GM12878 (cell line): ENCODE measurements at regions of chr1 and their contacts with region 1.

Region 1: GRCh38 chr1:101136739-101137138 is 100.1 kb upstream of the S1PR1 start:
- DNase-seq: peak; percentile 68
- ATAC-seq: peak; percentile 86
- H3K4me3 ChIP-seq: no peak overlapping the region
- H3K27ac ChIP-seq: no peak overlapping the region
- H3K4me1 ChIP-seq: peaks cover 17% of the 10 kb centered on the region
- H3K27me3 ChIP-seq: no peaks in the 10 kb centered on the region
- CTCF ChIP-seq: peak; percentile 29 to 61 (median 41); a peak in 4 of 6 replicates
- EP300 ChIP-seq: no peak
- POLR2A ChIP-seq: no peak
- RAD21 ChIP-seq: peak; percentile 83

Region 2: DNA sequence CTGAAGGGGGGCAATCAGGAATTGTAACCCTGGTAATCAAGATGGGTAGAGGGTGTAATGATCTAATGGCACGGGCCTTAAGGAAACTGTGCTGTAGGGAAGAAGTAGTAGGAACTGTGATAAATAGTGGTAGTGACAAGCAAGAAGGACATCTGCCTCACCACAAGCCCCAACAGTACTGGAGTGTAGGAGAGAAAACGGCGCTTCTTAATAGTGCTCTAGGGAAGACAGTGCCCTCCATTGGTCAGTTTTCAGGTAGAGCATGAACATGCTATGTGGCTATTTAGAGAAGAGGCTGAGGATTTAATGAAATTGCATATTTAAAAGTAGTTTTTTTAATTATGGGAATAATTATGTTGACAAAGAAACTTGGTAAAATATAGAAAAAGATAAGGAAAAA is 208.6 kb before region 1 on chr1:
- CTCF ChIA-PET with region 1: no interaction called
- POLR2A ChIA-PET with region 1: no interaction called
- RAD21 ChIA-PET with region 1: no interaction called
- SMC1A ChIA-PET with region 1: interaction called, 3 read pairs
- in situ Hi-C with region 1: no loop called
- intact Hi-C with region 1: loop called (anchors 2 kb)
- DNase-seq: no peak
- ATAC-seq: peak; percentile 47; the same call in 2 of the 3 replicates
- H3K4me3 ChIP-seq: no peak overlapping the region
- H3K27ac ChIP-seq: no peak overlapping the region
- H3K4me1 ChIP-seq: peaks cover 4% of the 10 kb centered on the region; the same call in 1 of the 2 replicates
- H3K27me3 ChIP-seq: no peaks in the 10 kb centered on the region
- CTCF ChIP-seq: no peak
- EP300 ChIP-seq: no peak
- POLR2A ChIP-seq: no peak
- RAD21 ChIP-seq: no peak

Region 3: GRCh38 chr1:101086783-101087182 is 50.0 kb before region 1 on chr1:
- CTCF ChIA-PET with region 1: no interaction called
- POLR2A ChIA-PET with region 1: no interaction called
- RAD21 ChIA-PET with region 1: no interaction called
- SMC1A ChIA-PET with region 1: no interaction called
- in situ Hi-C with region 1: no loop called
- intact Hi-C with region 1: no loop called
- DNase-seq: no peak
- ATAC-seq: no peak
- H3K4me3 ChIP-seq: no peak overlapping the region
- H3K27ac ChIP-seq: no peak overlapping the region
- H3K4me1 ChIP-seq: no peaks in the 10 kb centered on the region
- H3K27me3 ChIP-seq: no peaks in the 10 kb centered on the region
- CTCF ChIP-seq: no peak
- EP300 ChIP-seq: no peak
- POLR2A ChIP-seq: no peak
- RAD21 ChIP-seq: no peak

Region 4: GRCh38 chr1:101178688-101179491 is 42.2 kb after region 1 on chr1:
- CTCF ChIA-PET with region 1: interaction called, 3 read pairs
- POLR2A ChIA-PET with region 1: no interaction called
- RAD21 ChIA-PET with region 1: interaction called, 6 read pairs
- SMC1A ChIA-PET with region 1: interaction called, 8 read pairs
- in situ Hi-C with region 1: no loop called
- intact Hi-C with region 1: loop called (anchors 2 kb)
- DNase-seq: peak; percentile 80
- ATAC-seq: peak; percentile 88
- H3K4me3 ChIP-seq: peak overlapping the region; percentile 32; the same call in 1 of the 2 replicates
- H3K27ac ChIP-seq: peak overlapping the region; percentile 94
- H3K4me1 ChIP-seq: peaks cover 16% of the 10 kb centered on the region
- H3K27me3 ChIP-seq: no peaks in the 10 kb centered on the region
- CTCF ChIP-seq: no peak
- EP300 ChIP-seq: peak; percentile 90 to 95
- POLR2A ChIP-seq: no peak
- RAD21 ChIP-seq: peak; percentile 15; the same call in 1 of the 2 replicates

Region 5: GRCh38 chr1:101221945-101222429 is 85.2 kb after region 1 on chr1:
- CTCF ChIA-PET with region 1: interaction called, 14 read pairs
- POLR2A ChIA-PET with region 1: no interaction called
- RAD21 ChIA-PET with region 1: interaction called, 4 read pairs
- SMC1A ChIA-PET with region 1: interaction called, 3 read pairs
- in situ Hi-C with region 1: no loop called
- intact Hi-C with region 1: no loop called
- DNase-seq: peak; percentile 67
- ATAC-seq: peak; percentile 97
- H3K4me3 ChIP-seq: no peak overlapping the region
- H3K27ac ChIP-seq: peak overlapping the region; percentile 63
- H3K4me1 ChIP-seq: peaks cover 12% of the 10 kb centered on the region
- H3K27me3 ChIP-seq: no peaks in the 10 kb centered on the region
- CTCF ChIP-seq: no peak
- EP300 ChIP-seq: 0 out of 4 replicates have a peak, but pooled peaks of 1 of the 2 experiments have one; percentile 48
- POLR2A ChIP-seq: no peak
- RAD21 ChIP-seq: no peak

Region 6: DNA sequence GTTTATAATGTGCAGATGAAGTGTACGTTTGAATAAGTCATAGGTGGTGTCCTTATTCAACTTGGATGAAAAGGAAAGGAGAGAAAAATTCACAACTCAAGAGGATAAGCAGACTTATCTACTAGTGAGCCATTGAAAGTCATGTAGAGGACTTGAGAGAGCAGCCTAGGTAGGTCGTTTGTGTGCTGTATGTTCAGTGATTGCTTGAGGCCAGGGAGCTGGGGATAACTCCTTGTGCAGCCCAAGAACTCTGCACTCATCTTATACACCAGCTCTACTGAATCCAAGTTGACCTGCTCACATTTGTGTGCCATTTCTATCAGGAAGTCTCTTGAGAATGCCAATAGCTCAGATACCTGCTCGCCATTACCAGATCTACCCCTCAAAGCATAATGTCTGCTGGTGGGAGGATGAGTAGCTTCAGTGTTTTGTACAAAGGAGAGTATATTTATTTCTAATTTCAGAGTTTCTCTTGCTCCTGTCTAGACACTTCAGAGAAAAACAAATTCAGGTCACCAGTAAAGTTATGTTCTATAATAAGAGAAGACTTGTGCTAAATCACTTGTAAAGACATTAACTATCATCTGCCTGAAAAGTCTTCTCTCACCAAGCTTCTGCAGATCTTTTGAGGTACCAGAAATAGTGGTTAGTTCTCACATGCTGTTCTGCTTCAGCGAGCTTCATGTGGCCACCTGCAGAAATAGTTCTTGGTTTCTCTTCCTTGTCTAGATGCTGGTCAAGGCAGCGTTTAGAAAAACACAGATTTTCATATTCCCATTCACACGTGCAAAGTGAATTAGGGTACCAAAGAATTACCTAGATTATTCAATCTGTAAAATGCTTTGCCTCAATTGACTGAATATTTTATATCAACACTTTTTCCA is 110.9 kb after region 1 on chr1:
- CTCF ChIA-PET with region 1: interaction called, 9 read pairs
- POLR2A ChIA-PET with region 1: no interaction called
- RAD21 ChIA-PET with region 1: interaction called, 3 read pairs
- SMC1A ChIA-PET with region 1: interaction called, 13 read pairs
- in situ Hi-C with region 1: no loop called
- intact Hi-C with region 1: no loop called
- DNase-seq: peak; percentile 94
- ATAC-seq: peak; percentile 93
- H3K4me3 ChIP-seq: peak overlapping the region; percentile 10; the same call in 1 of the 2 replicates
- H3K27ac ChIP-seq: peak overlapping the region; percentile 76
- H3K4me1 ChIP-seq: peaks cover 31% of the 10 kb centered on the region
- H3K27me3 ChIP-seq: no peaks in the 10 kb centered on the region
- CTCF ChIP-seq: no peak
- EP300 ChIP-seq: peak; percentile 37 to 61; a peak in 3 of 4 replicates
- POLR2A ChIP-seq: no peak
- RAD21 ChIP-seq: peak; percentile 35